Sigmoid colon (tissue), 7 donors: ENCODE measurements at regions of chr19 and their contacts with region 1.

Region 1: GRCh38 chr19:8580710-8581281 is 3.6 kb upstream of the MYO1F start:
- DNase-seq: peak; percentile 88
- H3K4me3 ChIP-seq: no peak overlapping the region
- H3K27ac ChIP-seq: no peak overlapping the region
- H3K4me1 ChIP-seq: peaks cover 0 to 9% (median 3%) of the 10 kb centered on the region in 4 donors
- H3K27me3 ChIP-seq: peaks cover 4 to 18% (median 17%) of the 10 kb centered on the region in 3 donors
- CTCF ChIP-seq: peak; percentile 95 to 98 (median 96)
- EP300 ChIP-seq: no peak
- POLR2A ChIP-seq: no peak

Region 2: GRCh38 chr19:8430650-8431049 is 150.1 kb before region 1 on chr19:
- intact Hi-C with region 1: no loop called
- DNase-seq: no peak
- H3K4me3 ChIP-seq: no peak overlapping the region
- H3K27ac ChIP-seq: no peak overlapping the region
- H3K4me1 ChIP-seq: peaks cover 0 to 11% (median 4%) of the 10 kb centered on the region in 4 donors
- H3K27me3 ChIP-seq: no peaks in the 10 kb centered on the region
- CTCF ChIP-seq: no peak
- EP300 ChIP-seq: no peak
- POLR2A ChIP-seq: no peak

Region 3: DNA sequence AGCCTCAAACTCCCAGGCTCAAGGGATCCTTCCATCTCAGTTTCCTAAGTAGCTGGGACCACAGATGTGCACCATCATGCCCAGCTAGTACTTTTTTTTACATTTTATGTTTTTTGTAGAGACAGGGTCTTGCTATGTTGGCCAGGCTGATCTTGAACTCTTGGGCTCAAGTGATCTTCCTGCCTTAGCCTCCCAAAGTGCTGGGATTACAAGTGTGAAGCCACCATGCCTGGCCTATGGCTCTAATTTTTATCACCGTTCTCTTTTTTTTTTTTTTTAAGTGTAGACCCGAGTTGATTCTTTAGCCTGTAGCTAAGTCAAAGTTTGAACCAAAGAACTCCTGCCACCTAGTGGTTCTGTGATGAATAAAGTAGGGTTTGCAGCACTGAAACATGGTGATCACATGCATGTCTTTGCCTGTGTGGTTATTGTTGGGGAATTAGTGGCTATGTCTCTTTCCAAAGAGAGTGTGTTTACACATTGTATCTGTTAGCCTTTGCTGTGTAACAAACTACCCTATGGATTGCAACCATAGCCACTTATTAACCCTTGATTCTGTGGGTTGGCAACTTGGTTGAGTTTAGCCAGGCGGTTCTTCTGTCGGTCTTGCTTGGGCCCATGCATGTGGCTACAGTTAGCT is 61.2 kb after region 1 on chr19:
- intact Hi-C with region 1: loop called (anchors 2 kb)
- DNase-seq: no peak
- H3K4me3 ChIP-seq: no peak overlapping the region
- H3K27ac ChIP-seq: no peak overlapping the region
- H3K4me1 ChIP-seq: peaks cover 0 to 15% (median 4%) of the 10 kb centered on the region in 4 donors
- H3K27me3 ChIP-seq: peaks cover 0 to 9% (median 0%) of the 10 kb centered on the region in 3 donors
- CTCF ChIP-seq: peak in 3 of 4 experiments; percentile 23 to 50 (median 42)
- EP300 ChIP-seq: no peak
- POLR2A ChIP-seq: no peak

Region 4: DNA sequence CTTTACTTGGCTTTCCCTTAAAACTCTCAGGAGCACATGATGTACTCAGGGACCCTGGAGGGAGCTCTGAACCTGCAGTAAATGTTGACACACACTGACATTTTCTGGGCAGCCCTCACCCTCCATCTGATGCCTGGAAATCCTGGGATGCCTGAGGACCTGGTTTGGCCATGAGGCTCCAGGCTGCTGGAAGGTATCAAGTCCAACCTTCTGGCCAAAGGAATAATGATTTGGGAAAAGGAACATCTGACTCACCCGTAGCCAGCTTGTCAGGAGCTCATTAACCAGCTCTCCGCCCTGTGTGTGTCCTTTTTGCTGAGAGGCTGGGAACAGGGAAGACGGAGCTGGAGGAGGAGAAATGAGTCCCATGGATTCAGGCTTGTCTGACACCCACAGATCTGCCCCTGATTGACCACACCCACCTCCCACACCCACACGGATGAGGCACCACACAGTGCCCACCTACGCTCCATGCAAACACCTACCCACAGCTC is 241.0 kb after region 1 on chr19:
- intact Hi-C with region 1: no loop called
- DNase-seq: no peak
- H3K4me3 ChIP-seq: no peak overlapping the region
- H3K27ac ChIP-seq: peak overlapping the region; percentile 70 to 85 (median 84)
- H3K4me1 ChIP-seq: peaks cover 0 to 36% (median 24%) of the 10 kb centered on the region in 4 donors
- H3K27me3 ChIP-seq: no peaks in the 10 kb centered on the region
- CTCF ChIP-seq: no peak
- EP300 ChIP-seq: peak in 3 of 4 donors; percentile 29 to 91 (median 75)
- POLR2A ChIP-seq: no peak